GM10248 (cell line): ENCODE measurements at regions of chr16 and their contacts with region 1.

Region 1: GRCh38 chr16:86761111-86762031 is 183.0 kb downstream of the FOXL1 start:
- DNase-seq: peak; percentile 70
- CTCF ChIP-seq: peak; percentile 42

Region 2: DNA sequence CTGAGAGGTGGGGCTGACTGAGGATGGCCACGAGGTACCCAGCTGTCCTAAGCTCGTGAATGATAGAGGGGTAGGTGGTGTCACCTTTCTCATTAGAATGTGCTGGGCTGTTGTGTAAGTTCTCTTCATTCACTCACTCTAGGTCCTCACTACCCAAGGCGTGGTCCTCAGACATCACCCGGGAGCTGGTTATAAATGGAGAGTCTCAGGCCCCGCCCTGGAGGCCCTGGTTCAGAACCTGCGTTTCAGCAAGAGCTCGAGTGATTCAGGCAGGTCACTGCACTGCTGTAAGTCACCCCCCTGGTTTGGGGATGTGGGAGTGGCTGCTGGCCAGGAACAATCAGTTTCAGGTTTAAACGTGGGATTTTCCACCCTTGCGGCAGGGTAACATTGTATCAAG is 43.3 kb before region 1 on chr16:
- CTCF ChIA-PET with region 1: no interaction called
- POLR2A ChIA-PET with region 1: no interaction called
- DNase-seq: peak; percentile 37
- CTCF ChIP-seq: no peak

Region 3: DNA sequence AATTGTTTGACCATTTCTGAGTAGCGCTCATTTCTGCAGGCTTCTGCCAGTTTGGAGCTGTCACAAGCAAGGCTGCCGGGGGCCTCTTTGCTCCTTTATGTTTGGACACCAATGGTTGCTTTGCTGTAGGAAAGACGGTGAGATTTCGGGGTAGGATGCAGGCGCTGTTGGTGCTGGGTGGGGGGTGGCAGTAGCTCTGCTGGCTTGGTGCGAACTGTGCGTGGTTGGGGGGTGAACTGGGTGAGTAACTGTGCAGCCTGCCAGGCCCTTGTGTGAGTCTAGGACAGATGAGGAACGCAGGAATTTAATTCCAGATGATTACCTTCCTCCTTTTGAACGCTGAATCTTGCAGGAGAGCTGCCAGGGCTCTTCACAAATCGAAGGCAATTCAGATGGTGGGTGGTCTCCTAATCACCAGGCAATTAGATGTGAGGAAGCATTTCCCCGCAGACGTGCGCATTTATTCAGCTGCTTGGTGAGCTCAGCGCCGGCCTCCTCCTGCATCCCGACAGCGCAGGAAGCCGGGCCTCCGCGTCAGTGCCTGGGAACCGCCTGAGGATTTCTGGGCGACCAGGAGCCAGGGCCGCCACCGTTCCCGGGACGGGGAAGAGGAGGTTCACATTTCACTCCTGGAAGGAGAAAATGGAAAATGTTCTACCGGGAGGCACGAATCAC is 28.6 kb before region 1 on chr16:
- CTCF ChIA-PET with region 1: no interaction called
- POLR2A ChIA-PET with region 1: no interaction called
- DNase-seq: no peak
- CTCF ChIP-seq: no peak

Region 4: GRCh38 chr16:86751076-86752030 is 10.0 kb before region 1 on chr16:
- CTCF ChIA-PET with region 1: interaction called, 25 read pairs
- POLR2A ChIA-PET with region 1: no interaction called
- DNase-seq: no peak
- CTCF ChIP-seq: no peak

Region 5: GRCh38 chr16:86772671-86773353 is 11.4 kb after region 1 on chr16:
- CTCF ChIA-PET with region 1: interaction called, 10 read pairs
- POLR2A ChIA-PET with region 1: no interaction called
- DNase-seq: no peak
- CTCF ChIP-seq: no peak

Region 6: DNA sequence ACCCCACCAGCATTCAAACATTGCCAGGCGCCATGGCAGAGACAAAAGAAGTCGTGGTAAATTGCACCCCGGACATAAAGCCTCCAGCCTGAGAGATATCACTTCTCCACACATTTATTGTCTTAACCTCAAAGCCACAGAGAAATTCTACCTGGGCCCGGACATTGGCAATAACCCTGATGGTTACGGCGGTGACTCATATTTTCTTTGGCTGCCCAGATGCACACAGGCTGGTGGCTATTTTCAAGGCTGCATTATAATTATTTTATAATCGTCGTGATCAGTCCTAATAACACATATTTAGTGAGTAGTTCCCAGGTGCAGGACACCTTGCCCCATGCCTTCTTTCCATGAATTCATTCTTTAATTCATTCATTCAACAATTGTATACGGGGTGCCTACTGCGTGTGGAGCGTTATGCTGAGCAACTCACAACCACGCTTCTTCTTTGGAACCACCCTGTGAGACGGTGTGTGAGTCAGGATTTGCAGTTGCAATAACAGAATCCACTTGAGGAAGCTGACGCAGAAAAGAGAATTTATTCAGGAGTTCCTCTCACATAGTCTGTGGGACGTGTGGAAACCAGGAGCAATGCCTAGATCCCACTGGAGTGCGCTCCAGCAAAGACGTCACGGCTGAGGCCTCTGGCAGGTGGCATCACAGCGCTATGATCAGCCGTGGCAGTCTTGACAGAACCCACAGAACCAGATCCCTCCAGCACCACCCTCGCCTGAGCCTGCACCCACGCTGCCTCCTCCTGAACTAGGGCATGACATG is 62.7 kb after region 1 on chr16:
- CTCF ChIA-PET with region 1: no interaction called
- POLR2A ChIA-PET with region 1: no interaction called
- DNase-seq: no peak
- CTCF ChIP-seq: no peak

Region 7: DNA sequence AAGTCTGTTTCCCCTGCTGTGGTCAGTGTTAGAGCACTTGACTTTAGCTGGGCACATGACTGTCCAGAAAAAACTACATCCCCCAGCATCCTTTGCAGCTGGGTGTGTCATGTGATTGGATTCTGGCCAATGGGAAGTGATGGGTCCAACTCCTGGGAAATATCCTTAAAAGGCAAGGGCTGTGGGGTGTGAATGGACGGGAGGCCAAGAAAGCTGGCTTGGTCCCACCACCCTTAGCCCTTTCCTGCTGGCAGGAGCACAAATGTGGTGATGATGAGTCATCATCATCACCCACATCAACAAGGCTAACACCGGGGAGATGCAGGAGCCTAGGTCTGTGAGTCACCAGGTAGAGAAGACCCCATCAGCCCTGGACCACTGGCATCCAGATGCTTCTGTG is 214.1 kb after region 1 on chr16:
- CTCF ChIA-PET with region 1: no interaction called
- POLR2A ChIA-PET with region 1: no interaction called
- DNase-seq: no peak
- CTCF ChIP-seq: no peak